ENCODE measurements at regions of chr1 and their contacts with region 1.

Region 1: GRCh38 chr1:160291248-160292220 is 6.6 kb upstream of the PEX19 start:
- DNase-seq: peak; percentile 81
- H3K4me3 Mint-ChIP-seq: no peak overlapping the region
- H3K27ac Mint-ChIP-seq: peak overlapping the region; percentile 35
- H3K4me1 Mint-ChIP-seq: no peaks in the 10 kb centered on the region
- H3K27me3 Mint-ChIP-seq: no peaks in the 10 kb centered on the region

Region 2: GRCh38 chr1:160085686-160086455 is 205.7 kb before region 1 on chr1:
- CTCF ChIA-PET with region 1: interaction called, 15 read pairs
- DNase-seq: peak; percentile 85
- H3K4me3 Mint-ChIP-seq: no peak overlapping the region
- H3K27ac Mint-ChIP-seq: no peak overlapping the region
- H3K4me1 Mint-ChIP-seq: peaks cover 12% of the 10 kb centered on the region
- H3K27me3 Mint-ChIP-seq: peaks cover 32% of the 10 kb centered on the region

Region 3: GRCh38 chr1:160193091-160193819 is 98.3 kb before region 1 on chr1:
- CTCF ChIA-PET with region 1: interaction called, 119 read pairs
- DNase-seq: peak; percentile 86
- H3K4me3 Mint-ChIP-seq: no peak overlapping the region
- H3K27ac Mint-ChIP-seq: no peak overlapping the region
- H3K4me1 Mint-ChIP-seq: no peaks in the 10 kb centered on the region
- H3K27me3 Mint-ChIP-seq: peaks cover 19% of the 10 kb centered on the region

Region 4: DNA sequence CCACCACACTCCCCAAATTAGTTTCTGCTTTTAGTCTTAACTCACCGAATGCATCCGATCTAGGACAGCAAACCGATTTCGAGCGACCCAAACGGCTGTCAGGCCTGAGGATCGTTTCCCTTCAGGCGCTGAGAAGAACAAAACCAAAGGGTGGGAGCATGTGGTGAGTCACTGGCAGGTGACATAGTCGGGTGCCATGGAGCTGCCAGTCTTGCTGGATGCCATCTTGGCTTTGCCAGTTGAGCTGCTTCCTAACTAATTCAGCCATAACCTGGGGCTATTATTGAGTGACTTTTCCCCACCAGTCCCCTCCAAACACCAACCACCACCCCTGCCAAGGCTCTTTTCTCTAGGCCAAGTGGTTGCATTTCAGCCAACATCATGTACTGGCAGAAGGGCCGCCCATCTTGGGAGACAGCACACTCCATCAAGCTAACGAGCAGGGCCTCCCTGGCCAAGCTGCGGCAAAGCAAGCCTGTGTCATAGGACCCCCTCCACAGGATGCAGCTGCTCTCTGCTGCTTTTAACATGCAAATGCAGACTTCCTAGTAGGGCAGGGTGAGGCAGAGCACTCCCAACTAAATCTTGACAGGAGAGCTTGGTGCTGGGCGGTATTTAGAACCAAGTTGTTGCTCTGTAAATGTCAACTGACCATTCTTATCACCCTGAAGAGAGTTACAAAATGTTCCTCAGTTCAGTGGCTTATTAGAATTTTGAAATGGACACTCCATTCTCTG is 15.8 kb after region 1 on chr1:
- CTCF ChIA-PET with region 1: interaction called, 20 read pairs
- DNase-seq: no peak
- H3K4me3 Mint-ChIP-seq: no peak overlapping the region
- H3K27ac Mint-ChIP-seq: no peak overlapping the region
- H3K4me1 Mint-ChIP-seq: no peaks in the 10 kb centered on the region
- H3K27me3 Mint-ChIP-seq: no peaks in the 10 kb centered on the region

Region 5: GRCh38 chr1:160376525-160377131 is 85.1 kb after region 1 on chr1:
- CTCF ChIA-PET with region 1: interaction called, 20 read pairs
- DNase-seq: peak; percentile 44
- H3K4me3 Mint-ChIP-seq: no peak overlapping the region
- H3K27ac Mint-ChIP-seq: no peak overlapping the region
- H3K4me1 Mint-ChIP-seq: peaks cover 12% of the 10 kb centered on the region
- H3K27me3 Mint-ChIP-seq: peaks cover 35% of the 10 kb centered on the region

Measured in activated naive CD4-positive, alpha-beta T cell treated with anti-CD3 and anti-CD28 coated beads, Interleukin-2, amount 10 ng/mL, durations not matched to agents 7 days and 5 days (primary cell).